ENCODE measurements at regions of chr12 and their contacts with region 1.

Region 1: DNA sequence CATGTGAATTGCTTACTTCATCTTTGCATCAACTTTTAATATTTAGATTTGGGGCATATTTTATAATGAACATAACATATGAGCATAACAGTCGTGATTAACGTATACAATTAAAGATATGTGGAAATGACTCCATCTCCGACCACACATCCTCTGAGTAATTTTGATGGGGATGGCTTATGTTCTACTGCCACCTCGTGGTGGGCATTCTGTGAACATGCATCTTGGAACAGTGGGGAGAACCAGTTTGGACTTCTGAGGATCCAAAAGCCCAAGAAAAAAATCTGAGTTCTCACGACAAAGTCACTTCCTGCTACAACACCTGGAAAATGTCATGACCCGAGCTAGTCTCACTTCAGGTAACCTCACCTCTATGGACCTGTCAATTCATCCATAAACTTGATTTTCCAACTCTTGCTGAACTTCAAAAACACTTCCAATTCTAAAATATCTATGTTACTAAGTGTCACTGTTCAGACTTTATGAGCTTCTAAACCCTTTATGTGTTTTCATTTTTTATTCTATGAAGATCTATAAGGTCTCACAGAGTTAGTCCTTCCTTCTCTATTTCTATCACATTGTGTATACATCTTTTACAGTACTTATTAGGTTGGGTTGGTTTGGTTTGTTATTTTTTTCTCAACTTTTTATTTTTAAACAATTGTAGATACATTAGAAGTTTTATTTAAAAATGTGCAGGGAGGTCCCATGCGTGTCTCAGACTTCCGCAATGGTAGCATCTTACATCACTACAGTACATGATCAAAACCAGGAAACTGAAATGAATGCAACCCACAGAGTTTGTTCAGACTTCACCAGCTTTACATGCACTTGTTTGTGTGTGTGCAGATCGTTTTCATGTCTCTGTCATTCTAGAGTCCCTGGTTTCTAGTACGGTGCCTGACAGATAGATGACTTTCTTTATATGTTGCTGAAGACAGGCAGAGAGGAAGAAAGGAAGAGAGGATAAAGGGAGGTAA is 38.2 kb upstream of the STAB2 start:
- DNase-seq: peak; percentile 49
- CTCF ChIP-seq: peak; percentile 82

Region 2: DNA sequence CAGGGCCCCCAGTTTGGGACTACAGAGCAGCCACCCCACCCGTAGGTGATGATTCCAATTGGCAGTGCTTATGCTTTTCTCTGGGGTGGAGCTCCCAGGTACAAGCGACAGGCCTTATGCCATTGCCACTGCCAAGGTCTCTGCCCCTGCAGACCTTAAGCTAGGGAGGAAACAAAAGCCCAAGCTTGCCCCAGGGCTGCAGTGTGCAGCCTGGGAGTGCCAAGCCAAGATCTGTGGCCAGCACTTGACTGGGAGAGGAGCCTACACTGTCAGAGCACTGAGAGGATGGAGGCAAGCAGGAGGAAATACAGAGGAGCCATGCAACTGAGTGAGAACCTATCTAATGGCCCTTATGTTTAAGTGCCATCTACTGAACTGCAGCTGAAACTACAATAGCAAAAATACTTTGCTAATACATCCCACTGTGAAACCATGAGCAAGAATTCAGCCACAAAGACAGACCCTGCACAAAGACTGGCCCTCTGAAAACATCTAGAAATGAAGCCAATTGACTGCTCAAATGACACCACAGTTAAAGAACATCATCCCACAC is 609.2 kb before region 1 on chr12:
- CTCF ChIA-PET with region 1: interaction called, 17 read pairs
- POLR2A ChIA-PET with region 1: no interaction called
- DNase-seq: no peak
- CTCF ChIP-seq: no peak

Region 3: DNA sequence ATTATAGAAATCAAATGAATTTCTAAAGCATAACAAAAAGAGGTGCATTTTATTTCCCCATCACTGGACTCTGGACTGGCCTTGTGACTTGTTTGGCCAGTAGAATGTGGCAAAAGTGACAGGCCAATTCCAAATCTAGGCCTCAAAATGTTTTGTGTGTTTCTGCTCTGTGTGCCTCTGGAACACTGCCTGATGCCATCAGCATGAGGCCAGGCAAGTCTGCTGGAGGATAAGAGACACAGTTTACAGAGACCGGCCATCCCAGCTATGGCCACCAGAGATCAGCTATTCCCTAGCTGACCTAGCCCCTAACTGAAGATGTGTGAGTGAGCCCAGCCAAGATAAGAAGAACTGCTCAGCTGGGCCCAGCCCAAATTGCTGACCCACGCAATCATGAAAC is 558.5 kb before region 1 on chr12:
- CTCF ChIA-PET with region 1: interaction called, 10 read pairs
- POLR2A ChIA-PET with region 1: no interaction called
- DNase-seq: no peak
- CTCF ChIP-seq: peak; percentile 38

Region 4: GRCh38 chr12:103503977-103504376 is 44.9 kb before region 1 on chr12:
- CTCF ChIA-PET with region 1: interaction called, 37 read pairs
- POLR2A ChIA-PET with region 1: no interaction called
- DNase-seq: peak; percentile 51
- CTCF ChIP-seq: peak; percentile 72

Region 5: GRCh38 chr12:103571286-103571685 is 22.4 kb after region 1 on chr12:
- CTCF ChIA-PET with region 1: interaction called, 12 read pairs
- POLR2A ChIA-PET with region 1: no interaction called
- DNase-seq: no peak
- CTCF ChIP-seq: no peak

Region 6: GRCh38 chr12:103667125-103667524 is 118.2 kb after region 1 on chr12:
- CTCF ChIA-PET with region 1: no interaction called
- POLR2A ChIA-PET with region 1: no interaction called
- DNase-seq: no peak
- CTCF ChIP-seq: no peak